ENCODE measurements at regions of chr19 and their contacts with region 1.

Region 1: GRCh38 chr19:49085020-49085867 is at the start of gene SNRNP70:
- DNase-seq: peak; percentile 99 to 100 (median 99)
- ATAC-seq: peak; percentile 98 to 100 (median 98)
- H3K4me3 ChIP-seq: peak within 1 kb of the TSS; percentile 81 to 99 (median 90)
- H3K27ac ChIP-seq: peak within 1 kb of the TSS; percentile 42 to 94 (median 87)
- H3K4me1 ChIP-seq: peaks cover 0 to 36% (median 27%) of the 10 kb centered on the region in 12 donors
- H3K27me3 ChIP-seq: peaks cover 0 to 3% (median 0%) of the 10 kb centered on the region in 9 donors
- CTCF ChIP-seq: no peak
- POLR2A ChIP-seq: peak in 1 of 2 donors; percentile 76
- total RNA-seq, gene SNRNP70: 61.6 to 115 (median 92.2) TPM

Region 2: DNA sequence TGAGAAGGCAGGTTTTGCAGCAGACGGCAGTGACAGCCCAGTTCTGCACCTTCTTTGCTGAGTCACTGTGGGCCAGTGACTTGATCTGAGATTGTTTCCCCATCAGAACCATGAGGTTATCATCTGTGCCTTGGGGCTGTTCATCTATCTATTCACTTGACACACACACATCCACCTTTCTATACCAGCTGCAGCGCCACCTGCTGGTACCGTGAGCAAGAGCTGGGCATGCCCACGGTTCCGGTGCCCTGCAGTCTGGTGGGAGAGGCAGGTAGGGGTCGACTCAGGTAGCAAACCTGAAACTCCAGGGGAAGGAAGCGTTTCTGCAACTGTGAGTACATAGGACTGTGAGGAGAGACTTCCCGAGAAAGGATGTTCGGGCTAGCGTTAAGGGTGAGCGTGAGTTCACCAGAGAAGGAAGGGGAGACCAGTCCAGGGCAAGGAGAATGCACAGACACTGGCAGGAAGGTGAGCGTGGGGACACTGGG is 21.4 kb after region 1 on chr19:
- intact Hi-C with region 1: no loop called
- DNase-seq: peak in 2 of 5 donors; percentile 27 to 58
- ATAC-seq: peak in 3 of 4 donors; percentile 33 to 39 (median 35)
- H3K4me3 ChIP-seq: no peak overlapping the region
- H3K27ac ChIP-seq: no peak overlapping the region
- H3K4me1 ChIP-seq: peaks cover 0 to 19% (median 10%) of the 10 kb centered on the region in 12 donors
- H3K27me3 ChIP-seq: no peaks in the 10 kb centered on the region
- CTCF ChIP-seq: peak; percentile 58 to 80 (median 74)
- POLR2A ChIP-seq: no peak

Region 3: GRCh38 chr19:49157445-49158224 is 72.4 kb after region 1 on chr19 and contains the start of gene TRPM4:
- intact Hi-C with region 1: loop called in 1 of 10 experiments (anchors 5 kb)
- DNase-seq: peak; percentile 95 to 97 (median 96)
- ATAC-seq: peak; percentile 64 to 80 (median 79)
- H3K4me3 ChIP-seq: peak within 1 kb of the TSS; percentile 78 to 99 (median 90)
- H3K27ac ChIP-seq: peak within 1 kb of the TSS; percentile 89 to 100 (median 96)
- H3K4me1 ChIP-seq: peaks cover 0 to 40% (median 16%) of the 10 kb centered on the region in 12 donors
- H3K27me3 ChIP-seq: no peaks in the 10 kb centered on the region
- CTCF ChIP-seq: no peak
- POLR2A ChIP-seq: peak; percentile 6 to 92
- total RNA-seq, gene TRPM4: 19.3 to 34.5 (median 25.8) TPM

Region 4: DNA sequence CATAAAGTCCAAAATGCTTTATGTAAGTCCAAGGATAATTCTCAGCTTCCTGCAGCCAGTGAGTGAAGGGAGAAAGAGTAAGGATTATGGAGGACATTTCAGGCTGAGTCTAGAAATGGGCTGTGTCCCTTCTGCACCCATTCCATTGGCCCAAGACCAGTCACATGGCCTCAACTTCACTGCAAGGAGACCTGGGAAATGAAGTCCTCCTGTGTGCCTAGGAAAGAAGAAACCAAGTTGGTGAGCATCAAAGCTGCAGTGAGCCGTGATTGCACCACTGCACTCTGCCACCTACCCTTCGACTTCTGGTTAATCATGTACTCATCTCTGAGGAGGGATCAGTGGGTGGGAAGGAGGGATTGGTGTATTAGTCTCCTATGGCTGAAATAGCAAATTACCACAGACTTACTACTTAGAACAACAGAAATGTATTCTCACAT is 246.4 kb after region 1 on chr19:
- intact Hi-C with region 1: no loop called
- DNase-seq: peak in 2 of 5 donors; percentile 21 to 54
- ATAC-seq: peak; percentile 77 to 89 (median 88)
- H3K4me3 ChIP-seq: peak overlapping the region in 1 of 12 donors; percentile 26
- H3K27ac ChIP-seq: no peak overlapping the region
- H3K4me1 ChIP-seq: peaks cover 0 to 48% (median 0%) of the 10 kb centered on the region in 12 donors
- H3K27me3 ChIP-seq: no peaks in the 10 kb centered on the region
- CTCF ChIP-seq: no peak
- POLR2A ChIP-seq: no peak